OCI-LY7 (cell line): ENCODE measurements at regions of chr4 and their contacts with region 1.

Region 1: GRCh38 chr4:88320780-88321373 is 36.5 kb upstream of the PPM1K start:
- DNase-seq: peak; percentile 89
- H3K4me3 ChIP-seq: peak overlapping the region; percentile 57
- H3K27ac ChIP-seq: peak overlapping the region; percentile 90
- H3K4me1 ChIP-seq: peaks cover 44% of the 10 kb centered on the region
- CTCF ChIP-seq: no peak

Region 2: DNA sequence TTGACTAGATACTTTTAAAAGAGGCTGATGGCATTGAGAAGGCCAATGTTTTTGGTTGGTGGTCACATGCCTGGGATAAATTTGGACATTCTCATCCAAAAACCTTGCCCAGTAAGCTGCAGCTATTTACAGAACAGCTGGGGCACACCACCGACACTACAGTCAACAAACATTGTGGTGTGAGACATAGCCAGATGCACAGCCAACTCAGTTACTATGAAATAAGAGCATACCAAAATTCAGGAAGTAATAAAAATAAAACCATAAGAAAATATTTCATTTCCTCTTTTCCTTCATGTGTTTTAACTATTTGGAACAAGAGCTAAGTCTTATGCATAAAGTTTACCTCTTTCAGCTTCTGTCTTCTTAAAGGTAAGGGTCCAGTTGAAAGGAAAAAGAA is 45.4 kb before region 1 on chr4:
- CTCF ChIA-PET with region 1: interaction called, 3 read pairs
- POLR2A ChIA-PET with region 1: interaction called, 21 read pairs
- intact Hi-C with region 1: no loop called
- DNase-seq: peak; percentile 69
- H3K4me3 ChIP-seq: peak overlapping the region; percentile 61
- H3K27ac ChIP-seq: peak overlapping the region; percentile 91
- H3K4me1 ChIP-seq: peaks cover 65% of the 10 kb centered on the region
- CTCF ChIP-seq: no peak

Region 3: GRCh38 chr4:88308587-88308986 is 12.3 kb before region 1 on chr4:
- CTCF ChIA-PET with region 1: no interaction called
- POLR2A ChIA-PET with region 1: interaction called, 19 read pairs
- intact Hi-C with region 1: no loop called
- DNase-seq: no peak
- H3K4me3 ChIP-seq: no peak overlapping the region
- H3K27ac ChIP-seq: no peak overlapping the region
- H3K4me1 ChIP-seq: no peaks in the 10 kb centered on the region
- CTCF ChIP-seq: no peak

Region 4: DNA sequence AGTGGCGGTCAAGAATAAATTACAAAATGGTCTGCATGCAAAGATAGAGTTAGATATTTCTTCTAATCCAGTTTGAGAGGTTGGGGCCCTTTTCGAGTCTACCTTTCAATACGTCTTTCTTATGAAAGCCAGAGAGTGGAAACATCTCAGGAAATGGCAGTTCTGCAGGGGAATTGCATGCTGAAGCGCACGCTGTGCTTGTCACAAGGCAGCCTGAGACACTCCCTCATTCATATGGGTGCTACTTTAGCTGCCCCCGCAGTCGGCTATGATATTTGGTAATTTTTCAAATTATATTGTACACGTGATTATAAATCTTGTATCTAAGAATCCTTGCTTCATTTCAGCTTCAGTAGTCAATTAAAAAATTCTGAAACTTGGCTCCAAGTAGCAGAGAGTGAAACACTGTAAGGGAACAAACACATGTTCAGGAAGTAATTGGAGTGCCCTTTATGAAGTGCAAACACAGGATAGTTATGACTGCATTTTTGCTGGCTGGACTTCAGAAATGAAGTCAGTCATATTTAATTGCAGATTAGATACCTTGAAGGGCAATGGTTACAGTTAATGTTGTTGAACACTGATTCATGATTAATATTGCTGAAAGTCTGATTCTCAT is 522.3 kb after region 1 on chr4:
- CTCF ChIA-PET with region 1: no interaction called
- POLR2A ChIA-PET with region 1: no interaction called
- intact Hi-C with region 1: no loop called
- DNase-seq: no peak
- H3K4me3 ChIP-seq: no peak overlapping the region
- H3K27ac ChIP-seq: no peak overlapping the region
- H3K4me1 ChIP-seq: no peaks in the 10 kb centered on the region
- CTCF ChIP-seq: no peak